WTC11 (cell line): ENCODE measurements at regions of chr9 and their contacts with region 1.

Region 1: GRCh38 chr9:95167998-95168397 is 149.5 kb downstream of the FANCC start:
- DNase-seq: peak; percentile 77
- ATAC-seq: peak; percentile 96
- H3K4me3 Mint-ChIP-seq: no peak overlapping the region
- H3K27ac Mint-ChIP-seq: peak overlapping the region; percentile 73; the same call in 1 of the 2 replicates
- H3K4me1 Mint-ChIP-seq: peaks cover 18% of the 10 kb centered on the region
- H3K27me3 Mint-ChIP-seq: no peaks in the 10 kb centered on the region
- CTCF ChIP-seq: peak; percentile 93

Region 2: GRCh38 chr9:95103385-95103784 is 64.6 kb before region 1 on chr9:
- CTCF ChIA-PET with region 1: interaction called, 20 read pairs
- POLR2A ChIA-PET with region 1: no interaction called
- DNase-seq: peak; percentile 39
- ATAC-seq: peak; percentile 75
- H3K4me3 Mint-ChIP-seq: no peak overlapping the region
- H3K27ac Mint-ChIP-seq: peak overlapping the region; percentile 43
- H3K4me1 Mint-ChIP-seq: peaks cover 14% of the 10 kb centered on the region
- H3K27me3 Mint-ChIP-seq: no peaks in the 10 kb centered on the region
- CTCF ChIP-seq: no peak

Region 3: DNA sequence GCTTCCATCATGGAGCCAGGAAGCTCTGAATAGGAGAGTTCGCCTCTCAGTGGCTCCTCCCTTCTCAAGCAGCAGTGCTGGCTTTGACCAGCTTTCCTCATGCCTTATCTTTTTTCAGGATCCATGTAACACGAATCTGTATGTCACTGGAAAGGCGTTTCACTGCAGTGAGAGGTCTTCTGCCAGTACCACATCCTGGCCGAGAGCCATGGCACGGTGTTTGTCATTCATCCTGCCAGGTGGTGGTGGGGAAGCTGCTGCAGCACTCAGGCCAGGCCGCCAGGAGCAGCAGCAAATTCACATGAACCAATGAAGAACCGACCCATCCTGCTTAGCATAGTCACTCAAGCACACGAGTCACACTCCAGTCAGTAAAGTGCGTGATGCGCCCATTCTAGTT is 29.5 kb before region 1 on chr9:
- CTCF ChIA-PET with region 1: interaction called, 21 read pairs
- POLR2A ChIA-PET with region 1: no interaction called
- DNase-seq: peak; percentile 60
- ATAC-seq: peak; percentile 92
- H3K4me3 Mint-ChIP-seq: no peak overlapping the region
- H3K27ac Mint-ChIP-seq: no peak overlapping the region
- H3K4me1 Mint-ChIP-seq: peaks cover 25% of the 10 kb centered on the region
- H3K27me3 Mint-ChIP-seq: no peaks in the 10 kb centered on the region
- CTCF ChIP-seq: no peak

Region 4: GRCh38 chr9:95150903-95151302 is 17.1 kb before region 1 on chr9:
- CTCF ChIA-PET with region 1: interaction called, 25 read pairs
- POLR2A ChIA-PET with region 1: interaction called, 3 read pairs
- DNase-seq: no peak
- ATAC-seq: no peak
- H3K4me3 Mint-ChIP-seq: no peak overlapping the region
- H3K27ac Mint-ChIP-seq: no peak overlapping the region
- H3K4me1 Mint-ChIP-seq: peaks cover 13% of the 10 kb centered on the region
- H3K27me3 Mint-ChIP-seq: no peaks in the 10 kb centered on the region
- CTCF ChIP-seq: no peak

Region 5: GRCh38 chr9:95181226-95181818 is 13.3 kb after region 1 on chr9:
- CTCF ChIA-PET with region 1: interaction called, 34 read pairs
- POLR2A ChIA-PET with region 1: no interaction called
- DNase-seq: no peak
- ATAC-seq: no peak
- H3K4me3 Mint-ChIP-seq: no peak overlapping the region
- H3K27ac Mint-ChIP-seq: no peak overlapping the region
- H3K4me1 Mint-ChIP-seq: peaks cover 21% of the 10 kb centered on the region
- H3K27me3 Mint-ChIP-seq: no peaks in the 10 kb centered on the region
- CTCF ChIP-seq: peak; percentile 51

Region 6: DNA sequence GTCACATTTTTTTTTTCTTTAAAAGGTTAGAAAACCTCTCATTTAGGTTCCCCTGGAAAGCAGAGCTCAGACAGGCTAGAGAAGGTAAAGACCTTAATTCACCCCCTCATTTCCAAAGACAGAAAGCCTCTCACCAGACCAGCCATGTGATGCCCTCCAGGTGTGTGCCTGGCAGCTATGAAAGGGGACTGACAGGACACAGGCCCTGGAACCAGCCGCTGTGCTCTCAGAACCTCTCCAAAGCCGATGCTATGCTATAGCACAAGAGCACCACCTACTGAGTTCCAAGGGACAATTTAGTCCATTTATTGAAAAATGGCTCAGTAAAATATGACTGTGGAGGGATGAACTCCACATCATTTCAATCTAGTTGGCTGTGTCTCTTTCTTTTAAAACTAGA is 100.7 kb after region 1 on chr9:
- CTCF ChIA-PET with region 1: interaction called, 16 read pairs
- POLR2A ChIA-PET with region 1: no interaction called
- DNase-seq: peak; percentile 32
- ATAC-seq: peak; percentile 75
- H3K4me3 Mint-ChIP-seq: no peak overlapping the region
- H3K27ac Mint-ChIP-seq: no peak overlapping the region
- H3K4me1 Mint-ChIP-seq: peaks cover 32% of the 10 kb centered on the region
- H3K27me3 Mint-ChIP-seq: no peaks in the 10 kb centered on the region
- CTCF ChIP-seq: no peak